T-cell (primary cell): ENCODE measurements at regions of chr1 and their contacts with region 1.

Region 1: GRCh38 chr1:179197690-179198297 is 31.7 kb downstream of the ABL2 start:
- DNase-seq: no peak
- ATAC-seq: no peak
- H3K4me3 ChIP-seq: no peak overlapping the region
- H3K4me3 Mint-ChIP-seq: no peak overlapping the region
- H3K27ac ChIP-seq: no peak overlapping the region
- H3K27ac Mint-ChIP-seq: no peak overlapping the region
- H3K4me1 ChIP-seq: no peaks in the 10 kb centered on the region
- H3K4me1 Mint-ChIP-seq: peaks cover 16 to 35% (median 34%) of the 10 kb centered on the region in 3 donors
- H3K27me3 ChIP-seq: no peaks in the 10 kb centered on the region
- H3K27me3 Mint-ChIP-seq: no peaks in the 10 kb centered on the region

Region 2: DNA sequence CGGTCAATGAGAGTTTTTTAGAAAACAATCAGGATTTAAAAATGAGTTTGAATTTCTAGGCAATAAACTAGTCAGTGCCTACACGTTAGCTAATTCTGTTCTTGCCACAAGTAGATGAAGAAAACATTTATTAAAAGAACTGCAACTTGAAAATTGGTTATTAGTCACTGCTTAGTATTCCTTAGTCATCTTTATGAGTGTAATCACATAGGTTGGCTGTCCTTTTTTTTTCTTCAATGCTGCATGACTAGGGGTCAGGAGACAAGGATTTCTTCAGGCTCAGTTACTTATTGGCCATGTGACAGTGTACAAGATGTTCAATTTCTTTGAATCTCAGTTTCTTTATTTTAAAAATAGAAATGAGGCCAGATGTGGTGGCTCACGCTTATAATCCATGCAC is 112.9 kb after region 1 on chr1:
- CTCF ChIA-PET with region 1: no interaction called
- POLR2A ChIA-PET with region 1: no interaction called
- DNase-seq: no peak
- ATAC-seq: no peak
- H3K4me3 ChIP-seq: no peak overlapping the region
- H3K4me3 Mint-ChIP-seq: no peak overlapping the region
- H3K27ac ChIP-seq: no peak overlapping the region
- H3K27ac Mint-ChIP-seq: no peak overlapping the region
- H3K4me1 ChIP-seq: peaks cover 0 to 3% of the 10 kb centered on the region in 2 experiments
- H3K4me1 Mint-ChIP-seq: peaks cover 45 to 46% (median 45%) of the 10 kb centered on the region in 3 donors
- H3K27me3 ChIP-seq: no peaks in the 10 kb centered on the region
- H3K27me3 Mint-ChIP-seq: no peaks in the 10 kb centered on the region

Region 3: GRCh38 chr1:181122204-181122603 is 1924.4 kb after region 1 on chr1:
- CTCF ChIA-PET with region 1: no interaction called
- POLR2A ChIA-PET with region 1: interaction called in 1 of 2 experiments, 10 read pairs
- DNase-seq: no peak
- ATAC-seq: no peak
- H3K4me3 ChIP-seq: no peak overlapping the region
- H3K4me3 Mint-ChIP-seq: no peak overlapping the region
- H3K27ac ChIP-seq: no peak overlapping the region
- H3K27ac Mint-ChIP-seq: no peak overlapping the region
- H3K4me1 ChIP-seq: no peaks in the 10 kb centered on the region
- H3K4me1 Mint-ChIP-seq: peaks cover 0 to 4% (median 0%) of the 10 kb centered on the region in 3 donors
- H3K27me3 ChIP-seq: peaks cover 0 to 6% of the 10 kb centered on the region in 2 experiments
- H3K27me3 Mint-ChIP-seq: no peaks in the 10 kb centered on the region